Stomach (tissue), 19 donors: ENCODE measurements at regions of chr15 and their contacts with region 1.

Region 1: GRCh38 chr15:81398959-81399477 is 25.0 kb upstream of the TMC3 start:
- DNase-seq: no peak
- H3K4me3 ChIP-seq: no peak overlapping the region
- H3K27ac ChIP-seq: no peak overlapping the region
- H3K4me1 ChIP-seq: peaks cover 0 to 9% (median 0%) of the 10 kb centered on the region in 4 donors
- H3K27me3 ChIP-seq: no peaks in the 10 kb centered on the region
- CTCF ChIP-seq: no peak
- EP300 ChIP-seq: no peak
- POLR2A ChIP-seq: no peak

Region 2: DNA sequence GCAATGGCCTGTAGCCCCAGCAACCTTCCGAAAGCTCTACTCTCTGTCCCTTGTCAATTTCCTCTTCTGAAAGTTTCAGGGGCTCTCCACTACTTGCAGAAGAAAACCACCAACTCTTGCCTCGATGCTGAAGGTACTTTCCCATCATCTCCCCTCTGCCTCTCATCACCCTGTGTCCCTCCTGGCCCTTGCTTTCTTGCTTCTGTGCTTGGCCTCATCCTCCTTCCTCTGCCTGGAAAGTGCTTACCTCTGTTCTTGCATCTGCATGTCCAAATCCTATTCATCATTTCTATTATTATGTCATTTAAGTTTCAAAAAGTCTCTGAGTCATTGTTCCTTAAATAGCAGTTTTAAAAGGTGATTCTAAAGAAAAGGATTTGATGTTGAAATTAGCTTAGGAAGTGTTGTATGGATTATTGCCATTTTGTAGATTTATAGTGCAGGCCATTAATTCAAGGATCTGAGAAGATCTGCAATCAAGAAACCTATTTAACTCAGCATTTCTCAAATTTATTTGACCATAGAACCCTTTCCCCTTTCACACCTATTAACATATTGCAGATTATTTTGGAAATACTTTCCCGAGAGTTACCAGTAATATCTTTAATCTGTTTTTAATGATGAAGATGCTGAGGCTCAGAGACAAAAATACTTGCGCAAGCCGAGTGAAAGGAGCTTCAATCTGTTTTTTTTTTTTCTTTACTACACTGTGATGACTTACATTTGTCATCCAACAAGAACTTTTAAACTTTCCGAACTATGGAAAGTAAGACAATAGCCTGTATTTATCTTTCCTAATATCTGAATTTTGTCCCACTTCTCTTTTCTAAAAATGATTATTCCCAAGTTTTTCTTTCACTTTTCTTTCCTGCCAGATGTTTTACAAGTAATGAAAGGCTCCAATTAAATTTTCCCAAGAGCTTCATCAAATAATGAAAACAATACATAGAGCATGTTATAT is 287.2 kb before region 1 on chr15:
- intact Hi-C with region 1: loop called (anchors 10 kb)
- DNase-seq: no peak
- H3K4me3 ChIP-seq: no peak overlapping the region
- H3K27ac ChIP-seq: no peak overlapping the region
- H3K4me1 ChIP-seq: peaks cover 0 to 10% (median 0%) of the 10 kb centered on the region in 4 donors
- H3K27me3 ChIP-seq: no peaks in the 10 kb centered on the region
- CTCF ChIP-seq: no peak
- EP300 ChIP-seq: no peak
- POLR2A ChIP-seq: no peak